B cell (primary cell): ENCODE measurements at regions of chr9 and their contacts with region 1.

Region 1: GRCh38 chr9:125706661-125707471 is at the start of gene MAPKAP1:
- DNase-seq: peak; percentile 92
- ATAC-seq: peak; percentile 99
- H3K4me3 ChIP-seq: peak within 1 kb of the TSS; percentile 73 to 93 (median 81)
- H3K4me3 Mint-ChIP-seq: peak within 1 kb of the TSS; percentile 89
- H3K27ac ChIP-seq: peak within 1 kb of the TSS; percentile 75 to 84
- H3K27ac Mint-ChIP-seq: peak within 1 kb of the TSS; percentile 88
- H3K4me1 ChIP-seq: peaks cover 20 to 22% of the 10 kb centered on the region in 2 donors
- H3K4me1 Mint-ChIP-seq: peaks cover 47% of the 10 kb centered on the region
- H3K27me3 ChIP-seq: peaks cover 0 to 2% (median 0%) of the 10 kb centered on the region in 4 experiments
- H3K27me3 Mint-ChIP-seq: peaks cover 3% of the 10 kb centered on the region
- CTCF ChIP-seq: no peak
- total RNA-seq, gene MAPKAP1: 62.4 and 72.1 TPM in 2 replicates

Region 2: DNA sequence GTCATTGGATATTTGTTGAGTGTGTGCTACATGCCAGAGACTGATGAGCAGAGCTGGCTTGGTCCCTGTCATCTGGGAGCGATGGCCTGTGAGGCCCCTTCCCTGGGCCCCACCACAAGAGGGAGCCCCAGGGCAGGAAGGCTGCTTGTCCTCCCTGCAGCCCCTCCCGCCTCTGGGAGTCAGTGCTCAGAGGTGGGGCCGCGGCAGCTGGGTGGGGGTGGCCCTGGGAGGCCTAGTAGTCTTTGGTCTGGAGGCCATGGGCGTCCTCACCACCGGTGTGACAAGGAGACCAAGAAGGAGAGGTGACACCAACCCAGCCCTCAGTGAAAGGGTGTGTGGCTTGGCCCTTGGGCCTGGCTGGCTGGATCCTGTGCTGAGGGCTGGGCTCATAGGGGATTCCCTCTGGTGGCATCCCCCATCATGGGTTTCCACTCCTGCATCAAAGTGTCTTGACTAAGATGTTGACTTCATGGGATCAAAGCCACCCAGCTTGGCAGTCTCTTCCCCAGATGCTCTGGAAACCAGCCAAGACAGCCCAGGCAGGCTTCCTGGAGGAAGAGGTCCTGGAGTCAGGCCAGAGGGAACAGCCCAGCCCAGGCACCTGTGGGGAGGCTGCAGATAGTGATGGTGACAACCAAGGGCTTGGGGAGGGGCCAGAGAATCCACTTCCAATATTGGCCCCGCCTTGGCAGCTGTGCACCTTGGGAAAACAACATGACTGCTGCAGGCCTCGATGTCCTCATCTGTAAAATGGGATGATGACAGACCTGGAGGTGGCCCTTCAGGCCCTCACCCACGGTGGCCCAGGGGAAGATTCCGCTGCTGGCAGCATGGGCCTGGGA is 278.6 kb before region 1 on chr9:
- CTCF ChIA-PET with region 1: no interaction called
- POLR2A ChIA-PET with region 1: no interaction called
- intact Hi-C with region 1: no loop called
- DNase-seq: peak; percentile 52
- ATAC-seq: no peak
- H3K4me3 ChIP-seq: no peak overlapping the region
- H3K4me3 Mint-ChIP-seq: no peak overlapping the region
- H3K27ac ChIP-seq: no peak overlapping the region
- H3K27ac Mint-ChIP-seq: no peak overlapping the region
- H3K4me1 ChIP-seq: no peaks in the 10 kb centered on the region
- H3K4me1 Mint-ChIP-seq: no peaks in the 10 kb centered on the region
- H3K27me3 ChIP-seq: no peaks in the 10 kb centered on the region
- H3K27me3 Mint-ChIP-seq: no peaks in the 10 kb centered on the region
- CTCF ChIP-seq: peak; percentile 51

Region 3: GRCh38 chr9:125493384-125493783 is 213.5 kb before region 1 on chr9:
- CTCF ChIA-PET with region 1: no interaction called
- POLR2A ChIA-PET with region 1: interaction called, 13 read pairs
- intact Hi-C with region 1: no loop called
- DNase-seq: no peak
- ATAC-seq: no peak
- H3K4me3 ChIP-seq: no peak overlapping the region
- H3K4me3 Mint-ChIP-seq: no peak overlapping the region
- H3K27ac ChIP-seq: no peak overlapping the region
- H3K27ac Mint-ChIP-seq: no peak overlapping the region
- H3K4me1 ChIP-seq: peaks cover 14 to 15% of the 10 kb centered on the region in 2 donors
- H3K4me1 Mint-ChIP-seq: peaks cover 25% of the 10 kb centered on the region
- H3K27me3 ChIP-seq: no peaks in the 10 kb centered on the region
- H3K27me3 Mint-ChIP-seq: no peaks in the 10 kb centered on the region
- CTCF ChIP-seq: no peak

Region 4: GRCh38 chr9:125650271-125650737 is 56.6 kb before region 1 on chr9:
- CTCF ChIA-PET with region 1: interaction called, 4 read pairs
- POLR2A ChIA-PET with region 1: no interaction called
- intact Hi-C with region 1: loop called (anchors 2 kb)
- DNase-seq: peak; percentile 84
- ATAC-seq: peak; percentile 88
- H3K4me3 ChIP-seq: peak overlapping the region in 4 of 5 experiments; percentile 26 to 55 (median 28)
- H3K4me3 Mint-ChIP-seq: peak overlapping the region; percentile 73
- H3K27ac ChIP-seq: peak overlapping the region; percentile 81 to 95
- H3K27ac Mint-ChIP-seq: peak overlapping the region; percentile 88
- H3K4me1 ChIP-seq: peaks cover 70 to 78% of the 10 kb centered on the region in 2 donors
- H3K4me1 Mint-ChIP-seq: peaks cover 80% of the 10 kb centered on the region
- H3K27me3 ChIP-seq: no peaks in the 10 kb centered on the region
- H3K27me3 Mint-ChIP-seq: no peaks in the 10 kb centered on the region
- CTCF ChIP-seq: no peak

Region 5: DNA sequence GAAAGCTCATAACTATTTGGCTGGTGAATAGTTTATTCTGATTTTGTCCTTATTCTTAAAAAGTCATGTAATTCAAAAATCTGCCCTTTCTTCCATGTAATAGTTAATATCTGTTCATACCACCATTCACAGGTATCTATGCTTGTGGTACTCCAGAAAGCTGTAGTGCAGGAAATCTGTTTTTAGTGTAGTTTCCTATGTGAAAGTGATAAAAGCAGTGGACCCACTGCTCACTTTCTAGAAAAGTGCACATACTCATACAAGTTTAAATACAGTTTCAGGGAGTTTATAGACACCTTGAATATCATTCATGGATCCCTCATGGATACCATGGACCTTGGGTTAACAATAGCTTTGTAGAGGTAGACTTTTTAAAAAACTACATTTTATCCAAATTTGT is 60.5 kb after region 1 on chr9:
- CTCF ChIA-PET with region 1: no interaction called
- POLR2A ChIA-PET with region 1: no interaction called
- intact Hi-C with region 1: no loop called
- DNase-seq: no peak
- ATAC-seq: no peak
- H3K4me3 ChIP-seq: no peak overlapping the region
- H3K4me3 Mint-ChIP-seq: no peak overlapping the region
- H3K27ac ChIP-seq: peak overlapping the region in 1 of 2 donors; percentile 9
- H3K27ac Mint-ChIP-seq: no peak overlapping the region
- H3K4me1 ChIP-seq: peaks cover 10 to 12% of the 10 kb centered on the region in 2 donors
- H3K4me1 Mint-ChIP-seq: peaks cover 24% of the 10 kb centered on the region
- H3K27me3 ChIP-seq: no peaks in the 10 kb centered on the region
- H3K27me3 Mint-ChIP-seq: no peaks in the 10 kb centered on the region
- CTCF ChIP-seq: no peak

Region 6: GRCh38 chr9:125829743-125830142 is 122.9 kb after region 1 on chr9:
- CTCF ChIA-PET with region 1: no interaction called
- POLR2A ChIA-PET with region 1: no interaction called
- intact Hi-C with region 1: loop called (anchors 2 kb)
- DNase-seq: peak; percentile 79
- ATAC-seq: peak; percentile 94
- H3K4me3 ChIP-seq: peak overlapping the region; percentile 9 to 70 (median 55)
- H3K4me3 Mint-ChIP-seq: peak overlapping the region; percentile 92
- H3K27ac ChIP-seq: peak overlapping the region; percentile 5 to 86
- H3K27ac Mint-ChIP-seq: peak overlapping the region; percentile 94
- H3K4me1 ChIP-seq: peaks cover 2 to 12% of the 10 kb centered on the region in 2 donors
- H3K4me1 Mint-ChIP-seq: peaks cover 28% of the 10 kb centered on the region
- H3K27me3 ChIP-seq: no peaks in the 10 kb centered on the region
- H3K27me3 Mint-ChIP-seq: no peaks in the 10 kb centered on the region
- CTCF ChIP-seq: no peak